Gastrocnemius medialis (tissue), 4 donors: ENCODE measurements at regions of chr6 and their contacts with region 1.

Region 1: DNA sequence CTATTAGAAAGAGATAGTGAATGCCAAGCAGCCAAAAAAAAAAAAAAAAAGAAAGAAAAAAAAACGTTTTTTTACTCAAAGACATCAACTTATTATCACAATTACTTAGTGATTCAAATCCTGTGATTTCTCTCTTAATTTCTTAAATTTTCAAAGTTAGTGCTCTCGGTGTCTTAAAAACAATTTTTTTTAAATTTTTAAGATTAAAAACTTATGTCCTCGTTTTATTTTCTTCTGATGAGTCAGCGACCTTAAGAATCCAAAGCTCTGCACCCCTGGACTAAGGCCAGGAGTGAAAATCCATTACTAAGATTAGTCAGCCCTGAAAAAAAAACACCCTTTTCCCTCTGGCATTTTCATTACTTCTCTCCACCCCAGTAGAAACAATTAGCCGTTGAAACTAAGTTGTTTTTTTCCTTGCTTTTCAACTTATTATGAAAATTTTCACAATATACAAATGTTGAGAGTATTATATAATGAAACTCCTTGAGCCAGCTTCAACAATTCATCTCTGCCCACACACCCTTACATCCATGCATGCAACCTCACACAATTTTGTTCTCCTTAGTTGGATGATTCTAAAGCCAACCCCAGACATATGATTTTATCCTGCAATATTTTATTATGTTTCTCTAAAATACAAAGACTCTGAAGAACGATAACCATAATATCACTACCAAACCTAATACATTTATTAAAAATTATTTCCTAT is 85.6 kb upstream of the CARMIL1 start:
- DNase-seq: peak in 1 of 2 donors; percentile 26
- ATAC-seq: peak; percentile 58 to 64
- H3K4me3 ChIP-seq: no peak overlapping the region
- H3K27ac ChIP-seq: peak overlapping the region; percentile 43 to 70 (median 58)
- H3K4me1 ChIP-seq: peaks cover 4 to 6% of the 10 kb centered on the region in 2 donors
- H3K27me3 ChIP-seq: no peaks in the 10 kb centered on the region
- CTCF ChIP-seq: no peak
- POLR2A ChIP-seq: no peak

Region 2: DNA sequence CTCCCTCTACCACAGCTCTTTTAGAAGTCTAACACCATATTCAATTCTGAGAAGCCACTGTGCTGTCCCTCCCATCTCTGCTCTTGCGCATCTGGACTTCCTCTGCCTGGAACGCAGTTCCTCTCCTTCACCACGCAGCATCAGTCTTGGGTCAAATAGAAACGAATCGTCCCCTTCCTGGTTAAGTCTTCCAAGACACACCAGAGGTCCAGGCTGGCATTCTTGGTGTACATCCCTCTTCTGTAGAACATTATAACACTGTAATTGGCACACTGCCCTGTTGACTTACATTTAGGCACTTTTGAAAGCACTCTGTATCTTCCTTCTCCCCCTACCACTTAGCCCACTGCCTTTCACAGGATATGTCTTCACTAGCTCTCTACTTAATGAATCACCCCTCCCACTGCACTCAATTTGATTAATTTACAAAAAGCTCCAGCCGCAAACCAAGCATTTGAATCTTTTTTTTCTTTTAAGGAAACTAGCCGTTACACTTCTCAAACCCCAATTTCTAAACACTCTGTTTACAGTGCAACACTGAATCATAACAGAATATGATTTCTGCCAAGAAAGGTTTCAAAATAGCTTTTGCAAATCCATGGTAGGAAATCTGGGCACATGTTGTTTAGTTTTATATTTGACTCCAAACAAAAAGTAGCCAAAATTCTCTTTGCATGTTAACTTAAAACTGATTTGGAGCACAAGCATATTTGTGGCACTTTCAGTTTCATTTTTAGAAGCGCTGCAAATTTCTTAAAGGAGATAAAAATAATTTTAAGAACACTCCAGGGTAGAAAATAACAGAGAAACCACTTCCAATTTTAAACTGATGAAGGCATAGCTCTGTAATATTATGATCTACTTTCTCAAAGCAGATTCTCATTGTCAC is 55.1 kb before region 1 on chr6:
- in situ Hi-C with region 1: no loop called
- intact Hi-C with region 1: loop called (anchors 10 kb)
- DNase-seq: peak; percentile 30 to 32
- ATAC-seq: peak; percentile 77 to 88
- H3K4me3 ChIP-seq: peak overlapping the region; percentile 43 to 69 (median 56)
- H3K27ac ChIP-seq: peak overlapping the region; percentile 77 to 82 (median 79)
- H3K4me1 ChIP-seq: peaks cover 9 to 13% of the 10 kb centered on the region in 2 donors
- H3K27me3 ChIP-seq: no peaks in the 10 kb centered on the region
- CTCF ChIP-seq: no peak
- POLR2A ChIP-seq: peak; percentile 34 to 35

Region 3: GRCh38 chr6:25435416-25435985 is 241.9 kb after region 1 on chr6:
- in situ Hi-C with region 1: no loop called
- intact Hi-C with region 1: no loop called
- DNase-seq: no peak
- ATAC-seq: no peak
- H3K4me3 ChIP-seq: no peak overlapping the region
- H3K27ac ChIP-seq: no peak overlapping the region
- H3K4me1 ChIP-seq: no peaks in the 10 kb centered on the region
- H3K27me3 ChIP-seq: no peaks in the 10 kb centered on the region
- CTCF ChIP-seq: no peak
- POLR2A ChIP-seq: no peak